Activated B cell treated with CpG ODN at 0.5 μM for 24 hours (primary cell): ENCODE measurements at regions of chr14 and their contacts with region 1.

Region 1: DNA sequence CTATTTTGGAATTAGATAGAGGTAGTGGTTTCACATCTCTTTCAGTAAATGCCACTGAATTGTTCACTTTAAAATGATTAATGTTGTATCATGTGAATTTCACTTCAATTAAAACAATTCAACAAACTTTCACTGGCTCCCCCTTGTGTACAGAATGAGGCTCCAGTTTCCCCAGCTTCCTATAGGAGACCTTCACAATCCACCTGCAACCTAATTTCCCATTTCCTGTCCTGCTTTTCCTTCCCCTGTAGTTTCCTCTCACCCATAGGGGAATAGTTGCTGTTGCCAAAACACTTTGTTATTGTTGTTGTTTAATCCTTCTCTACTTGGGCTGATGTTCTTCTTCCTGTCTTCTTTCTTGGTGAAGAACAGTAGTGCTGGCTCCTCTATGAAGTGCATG is 59.8 kb downstream of the NPAS3 start:
- DNase-seq: no peak
- ATAC-seq: no peak
- H3K4me3 Mint-ChIP-seq: no peak overlapping the region
- H3K27ac Mint-ChIP-seq: no peak overlapping the region
- H3K4me1 Mint-ChIP-seq: no peaks in the 10 kb centered on the region
- H3K27me3 Mint-ChIP-seq: no peaks in the 10 kb centered on the region
- CTCF ChIP-seq: no peak

Region 2: DNA sequence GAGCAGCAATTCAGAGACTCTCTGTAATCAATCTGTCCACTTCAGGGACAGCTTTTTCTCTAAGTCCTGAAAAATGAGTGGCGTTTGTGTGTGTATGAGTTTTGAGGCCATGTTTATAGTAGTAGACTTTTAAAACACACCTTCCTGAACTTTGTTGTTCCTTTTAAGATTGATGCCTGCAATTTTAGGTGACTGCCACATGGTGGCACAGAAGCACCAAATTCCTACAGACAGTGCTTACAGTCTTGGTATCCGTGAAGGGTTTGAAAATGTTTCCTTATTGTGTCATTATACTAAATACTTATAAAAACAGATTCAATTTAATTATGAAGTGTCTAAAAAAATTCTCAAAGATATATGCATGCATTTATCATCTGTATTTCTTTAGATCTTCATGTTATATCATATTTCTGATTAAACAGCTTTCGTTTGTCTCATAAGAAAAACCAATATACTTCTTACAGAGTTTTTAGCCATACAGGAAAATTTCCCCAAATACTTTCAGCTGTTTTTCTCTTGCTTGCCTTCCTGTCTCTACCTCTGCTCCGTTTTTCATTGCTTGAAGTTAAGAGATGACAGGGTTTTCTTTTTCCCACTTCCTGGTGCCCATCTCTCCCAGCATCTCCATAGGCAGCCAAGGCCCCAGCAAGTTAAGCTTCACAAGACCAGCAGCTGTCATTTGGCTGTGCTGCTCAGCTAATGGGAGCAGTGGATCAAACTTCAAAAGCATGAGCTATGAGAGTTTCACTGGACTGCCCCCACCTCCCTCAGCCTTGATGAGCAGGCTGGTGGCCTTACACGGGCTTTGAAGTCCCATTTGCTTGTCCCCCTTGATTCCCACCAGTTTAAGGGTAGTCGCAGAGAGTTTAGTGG is 409.7 kb before region 1 on chr14:
- CTCF ChIA-PET with region 1: no interaction called
- POLR2A ChIA-PET with region 1: no interaction called
- intact Hi-C with region 1: loop called (anchors 2 kb)
- DNase-seq: no peak
- ATAC-seq: no peak
- H3K4me3 Mint-ChIP-seq: no peak overlapping the region
- H3K27ac Mint-ChIP-seq: no peak overlapping the region
- H3K4me1 Mint-ChIP-seq: no peaks in the 10 kb centered on the region
- H3K27me3 Mint-ChIP-seq: peaks cover 3% of the 10 kb centered on the region
- CTCF ChIP-seq: no peak